Activated T-helper 1 cell treated with anti-CD3 and anti-CD28 coated beads, Interleukin-12 subunit alpha, Interleukin-12 subunit beta, Interleukin-2, Interleukin-4 antibody, amounts not matched to agents 30 ng/mL and 10 ng/mL and 1 ng/mL, durations not matched to agents 14 hours and 24 hours and 36 hours (primary cell): ENCODE measurements at regions of chr4 and their contacts with region 1.

Region 1: GRCh38 chr4:88523325-88524129 is at the start of gene PYURF:
- DNase-seq: peak; percentile 79
- H3K4me3 Mint-ChIP-seq: peak within 1 kb of the TSS; percentile 99
- H3K27ac Mint-ChIP-seq: peak within 1 kb of the TSS; percentile 97
- H3K4me1 Mint-ChIP-seq: peaks cover 60% of the 10 kb centered on the region
- H3K27me3 Mint-ChIP-seq: peaks cover 2% of the 10 kb centered on the region
- total RNA-seq, gene PYURF: 55.9 and 61.5 TPM in 2 replicates

Region 2: DNA sequence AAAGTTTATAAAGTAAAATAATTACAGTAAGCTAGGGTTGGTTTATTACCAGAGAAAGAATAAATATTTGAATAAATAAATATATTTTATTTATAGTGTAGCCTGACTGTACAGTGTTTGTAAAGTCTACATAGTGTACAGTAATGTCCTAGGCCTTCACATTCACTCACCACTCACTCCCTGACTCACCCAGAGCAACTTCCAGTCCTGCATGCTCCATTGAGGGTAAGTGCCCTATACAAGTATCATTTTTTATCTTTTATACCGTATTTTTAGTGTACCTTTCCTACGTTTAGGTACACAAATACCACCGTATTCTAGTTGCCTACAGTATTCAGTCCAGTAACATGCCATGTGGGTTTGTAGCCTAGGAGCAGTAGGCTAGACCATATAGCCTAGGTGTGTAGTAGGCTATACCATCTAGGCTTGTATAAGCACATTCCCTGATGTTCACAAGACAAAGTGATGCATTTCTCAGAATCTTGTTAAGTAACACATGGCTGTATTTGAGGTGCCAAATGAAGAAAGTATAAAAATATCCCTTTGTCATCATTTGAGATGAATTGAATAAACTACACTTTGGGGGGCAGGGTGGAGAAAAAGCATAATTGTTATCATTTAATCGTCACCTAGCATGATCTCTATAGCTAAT is 1288.4 kb before region 1 on chr4:
- intact Hi-C with region 1: loop called (anchors 10 kb)
- DNase-seq: no peak
- H3K4me3 Mint-ChIP-seq: no peak overlapping the region
- H3K27ac Mint-ChIP-seq: no peak overlapping the region
- H3K4me1 Mint-ChIP-seq: peaks cover 7% of the 10 kb centered on the region
- H3K27me3 Mint-ChIP-seq: peaks cover 14% of the 10 kb centered on the region

Region 3: GRCh38 chr4:88007304-88008121 is 516.0 kb before region 1 on chr4 and contains the start of gene PKD2:
- intact Hi-C with region 1: loop called (anchors 2 kb)
- DNase-seq: peak; percentile 79
- H3K4me3 Mint-ChIP-seq: peak within 1 kb of the TSS; percentile 89
- H3K27ac Mint-ChIP-seq: peak within 1 kb of the TSS; percentile 80
- H3K4me1 Mint-ChIP-seq: peaks cover 41% of the 10 kb centered on the region
- H3K27me3 Mint-ChIP-seq: peaks cover 20% of the 10 kb centered on the region
- total RNA-seq, gene PKD2: 10.1 and 11.7 TPM in 2 replicates

Region 4: GRCh38 chr4:88158489-88159243 is 364.9 kb before region 1 on chr4 and contains the start of gene ABCG2:
- intact Hi-C with region 1: loop called (anchors 2 kb)
- DNase-seq: peak; percentile 46
- H3K4me3 Mint-ChIP-seq: peak within 1 kb of the TSS; percentile 80
- H3K27ac Mint-ChIP-seq: peak within 1 kb of the TSS; percentile 16
- H3K4me1 Mint-ChIP-seq: peaks cover 17% of the 10 kb centered on the region
- H3K27me3 Mint-ChIP-seq: peaks cover 18% of the 10 kb centered on the region
- total RNA-seq, gene ABCG2: 0.34 TPM in 2 replicates

Region 5: GRCh38 chr4:88429401-88429800 is 94.1 kb before region 1 on chr4:
- intact Hi-C with region 1: no loop called
- DNase-seq: no peak
- H3K4me3 Mint-ChIP-seq: no peak overlapping the region
- H3K27ac Mint-ChIP-seq: no peak overlapping the region
- H3K4me1 Mint-ChIP-seq: no peaks in the 10 kb centered on the region
- H3K27me3 Mint-ChIP-seq: no peaks in the 10 kb centered on the region

Region 6: GRCh38 chr4:88659055-88659889 is 135.7 kb after region 1 on chr4:
- intact Hi-C with region 1: loop called (anchors 1 kb)
- DNase-seq: no peak
- H3K4me3 Mint-ChIP-seq: no peak overlapping the region
- H3K27ac Mint-ChIP-seq: no peak overlapping the region
- H3K4me1 Mint-ChIP-seq: peaks cover 12% of the 10 kb centered on the region
- H3K27me3 Mint-ChIP-seq: no peaks in the 10 kb centered on the region

Region 7: GRCh38 chr4:88792268-88792781 is 268.8 kb after region 1 on chr4:
- intact Hi-C with region 1: loop called (anchors 2 kb)
- DNase-seq: no peak
- H3K4me3 Mint-ChIP-seq: no peak overlapping the region
- H3K27ac Mint-ChIP-seq: no peak overlapping the region
- H3K4me1 Mint-ChIP-seq: peaks cover 21% of the 10 kb centered on the region
- H3K27me3 Mint-ChIP-seq: peaks cover 21% of the 10 kb centered on the region

Region 8: GRCh38 chr4:88919056-88919455 is 395.5 kb after region 1 on chr4:
- intact Hi-C with region 1: no loop called
- DNase-seq: no peak
- H3K4me3 Mint-ChIP-seq: no peak overlapping the region
- H3K27ac Mint-ChIP-seq: no peak overlapping the region
- H3K4me1 Mint-ChIP-seq: no peaks in the 10 kb centered on the region
- H3K27me3 Mint-ChIP-seq: no peaks in the 10 kb centered on the region

Region 9: DNA sequence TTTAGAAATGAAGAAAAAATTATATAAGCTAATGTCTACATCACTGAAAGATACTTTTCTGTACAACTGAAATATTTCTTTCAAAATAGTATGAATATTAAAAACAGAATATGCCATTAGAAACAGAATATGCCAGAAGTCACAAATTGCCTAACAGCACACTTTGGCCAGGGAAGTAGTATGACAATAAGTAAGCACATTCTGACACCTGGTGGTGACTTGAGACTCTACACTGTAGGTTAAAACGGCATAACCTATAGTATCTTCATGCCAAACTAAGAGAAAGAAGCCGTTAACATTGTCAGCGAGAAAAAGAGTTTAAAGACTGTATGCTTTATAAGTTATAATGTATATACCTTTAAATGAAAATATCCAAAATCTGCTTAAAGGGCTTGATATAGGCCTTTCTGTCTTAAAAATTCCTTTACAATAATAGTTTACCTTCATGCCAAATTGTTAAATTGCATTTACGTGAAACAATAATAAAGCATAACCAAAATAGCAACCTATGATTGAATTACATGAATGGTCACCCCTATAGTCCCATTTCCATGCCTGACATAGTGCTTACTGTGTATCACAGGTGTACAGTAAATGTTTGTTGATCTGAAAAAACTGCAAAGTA is 500.6 kb after region 1 on chr4:
- intact Hi-C with region 1: loop called (anchors 1 kb)
- DNase-seq: peak; percentile 42
- H3K4me3 Mint-ChIP-seq: no peak overlapping the region
- H3K27ac Mint-ChIP-seq: no peak overlapping the region
- H3K4me1 Mint-ChIP-seq: no peaks in the 10 kb centered on the region
- H3K27me3 Mint-ChIP-seq: peaks cover 5% of the 10 kb centered on the region